ENCODE measurements at regions of chr5 and their contacts with region 1.

Region 1: GRCh38 chr5:110258460-110259216 is 467.8 kb downstream of the TMEM232 start:
- DNase-seq: no peak
- ATAC-seq: no peak
- H3K4me3 Mint-ChIP-seq: no peak overlapping the region
- H3K27ac Mint-ChIP-seq: no peak overlapping the region
- H3K4me1 Mint-ChIP-seq: no peaks in the 10 kb centered on the region
- H3K27me3 Mint-ChIP-seq: no peaks in the 10 kb centered on the region
- CTCF ChIP-seq: no peak

Region 2: DNA sequence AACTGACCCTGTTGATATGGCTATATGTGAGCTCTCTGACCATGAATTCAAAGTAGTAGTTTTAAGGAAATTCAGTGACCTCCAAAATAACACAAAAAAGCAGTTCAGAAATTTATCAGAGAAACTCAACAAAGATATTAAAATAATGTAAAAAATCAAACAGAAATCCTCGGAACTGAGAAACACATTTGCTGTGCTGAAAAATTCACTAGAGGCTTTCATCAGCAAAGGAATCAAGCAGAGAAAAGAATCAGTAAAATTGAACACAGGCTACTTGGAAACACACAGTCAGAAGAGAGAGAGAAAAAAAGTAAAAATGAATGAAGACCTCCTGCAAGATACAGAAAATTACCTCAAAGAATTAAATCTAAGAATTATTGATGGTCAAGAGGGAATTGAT is 50.6 kb after region 1 on chr5:
- CTCF ChIA-PET with region 1: no interaction called
- POLR2A ChIA-PET with region 1: no interaction called
- intact Hi-C with region 1: loop called (anchors 2 kb)
- DNase-seq: no peak
- ATAC-seq: no peak
- H3K4me3 Mint-ChIP-seq: no peak overlapping the region
- H3K27ac Mint-ChIP-seq: no peak overlapping the region
- H3K4me1 Mint-ChIP-seq: no peaks in the 10 kb centered on the region
- H3K27me3 Mint-ChIP-seq: no peaks in the 10 kb centered on the region
- CTCF ChIP-seq: no peak

Region 3: GRCh38 chr5:110354311-110354710 is 95.7 kb after region 1 on chr5:
- CTCF ChIA-PET with region 1: no interaction called
- POLR2A ChIA-PET with region 1: no interaction called
- intact Hi-C with region 1: no loop called
- DNase-seq: no peak
- ATAC-seq: no peak
- H3K4me3 Mint-ChIP-seq: no peak overlapping the region
- H3K27ac Mint-ChIP-seq: no peak overlapping the region
- H3K4me1 Mint-ChIP-seq: no peaks in the 10 kb centered on the region
- H3K27me3 Mint-ChIP-seq: no peaks in the 10 kb centered on the region
- CTCF ChIP-seq: no peak